Sigmoid colon (tissue), 7 donors: ENCODE measurements at regions of chr3 and their contacts with region 1.

Region 1: DNA sequence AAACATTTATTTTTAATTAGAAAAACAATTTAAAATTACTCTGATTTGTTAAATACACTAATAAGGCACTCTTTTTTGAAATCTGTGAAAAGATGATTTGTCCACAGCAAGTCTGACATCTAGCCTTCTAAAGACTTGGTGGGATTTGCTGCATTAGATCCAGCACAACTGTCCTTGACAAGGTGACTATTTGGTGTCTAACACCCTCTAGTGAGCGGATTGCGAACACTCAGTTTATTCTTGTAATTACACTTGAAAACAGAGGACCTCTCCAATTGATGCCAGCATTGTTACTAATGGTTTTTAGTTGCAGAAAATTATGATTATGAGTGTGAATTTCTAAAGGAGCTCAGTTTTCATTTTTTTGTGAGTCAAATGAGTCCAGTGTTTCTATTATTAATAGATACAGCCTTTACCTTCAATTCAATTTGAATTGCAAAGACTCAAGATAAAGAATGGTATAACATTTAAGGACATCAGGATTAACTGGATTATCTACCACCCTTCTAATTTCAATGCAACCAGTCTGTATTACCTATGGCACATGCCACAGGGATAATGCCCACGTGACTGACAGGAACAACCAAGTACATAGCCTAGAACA is 29.7 kb upstream of the STRIT1 start:
- DNase-seq: no peak
- H3K4me3 ChIP-seq: no peak overlapping the region
- H3K27ac ChIP-seq: no peak overlapping the region
- H3K4me1 ChIP-seq: no peaks in the 10 kb centered on the region
- H3K27me3 ChIP-seq: no peaks in the 10 kb centered on the region
- CTCF ChIP-seq: peak in 3 of 4 experiments; percentile 31 to 56 (median 46)
- EP300 ChIP-seq: no peak
- POLR2A ChIP-seq: no peak

Region 2: GRCh38 chr3:154334973-154335420 is 988.2 kb before region 1 on chr3:
- intact Hi-C with region 1: loop called (anchors 10 kb)
- DNase-seq: no peak
- H3K4me3 ChIP-seq: no peak overlapping the region
- H3K27ac ChIP-seq: no peak overlapping the region
- H3K4me1 ChIP-seq: no peaks in the 10 kb centered on the region
- H3K27me3 ChIP-seq: no peaks in the 10 kb centered on the region
- CTCF ChIP-seq: peak in 3 of 4 experiments; percentile 17 to 57 (median 37)
- EP300 ChIP-seq: no peak
- POLR2A ChIP-seq: no peak

Region 3: DNA sequence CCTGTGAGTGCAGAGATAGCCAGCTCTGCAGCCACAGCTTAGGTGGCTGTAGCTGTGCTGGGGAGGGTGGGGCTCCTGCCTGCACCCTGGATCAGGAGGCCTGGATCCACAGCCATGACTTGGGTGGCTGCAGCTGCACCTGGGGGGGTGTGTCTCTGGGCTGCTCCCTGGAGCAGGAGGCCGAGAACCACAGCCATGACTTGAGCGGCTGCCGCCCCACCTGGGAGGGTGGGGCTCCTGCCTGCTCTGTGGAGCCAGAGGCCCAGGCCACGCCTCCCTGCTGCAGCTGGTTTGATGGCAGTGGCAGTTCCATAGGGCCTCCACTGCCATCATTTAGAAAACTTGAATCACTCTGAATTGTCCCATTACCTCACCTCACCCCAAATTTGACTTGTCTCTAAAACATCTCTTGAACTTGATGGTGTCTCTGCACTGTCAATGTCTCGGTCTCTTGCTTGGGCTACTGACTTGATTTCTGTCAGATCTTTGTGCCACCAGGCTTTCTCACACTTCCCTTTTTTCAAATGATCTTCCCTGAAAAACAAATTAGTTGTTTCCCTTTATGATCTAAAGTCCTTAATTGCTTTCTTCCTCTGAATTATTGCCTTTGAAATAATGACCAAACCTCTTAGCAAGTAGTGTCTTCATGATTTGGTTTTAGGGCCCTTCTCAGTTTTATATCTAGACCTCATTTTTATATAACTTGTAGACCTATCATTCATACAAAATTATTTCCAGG is 556.2 kb before region 1 on chr3:
- intact Hi-C with region 1: loop called (anchors 10 kb)
- DNase-seq: no peak
- H3K4me3 ChIP-seq: no peak overlapping the region
- H3K27ac ChIP-seq: no peak overlapping the region
- H3K4me1 ChIP-seq: no peaks in the 10 kb centered on the region
- H3K27me3 ChIP-seq: no peaks in the 10 kb centered on the region
- CTCF ChIP-seq: no peak
- EP300 ChIP-seq: no peak
- POLR2A ChIP-seq: no peak